ENCODE measurements at regions of chr2 and their contacts with region 1.

Region 1: GRCh38 chr2:218395797-218396687 is 3.6 kb upstream of the CTDSP1 start:
- H3K4me3 ChIP-seq: peak overlapping the region; percentile 74
- H3K27ac ChIP-seq: peak overlapping the region; percentile 93
- H3K4me1 ChIP-seq: peaks cover 15% of the 10 kb centered on the region
- CTCF ChIP-seq: peak; percentile 96

Region 2: GRCh38 chr2:218286570-218287459 is 109.2 kb before region 1 on chr2:
- CTCF ChIA-PET with region 1: interaction called, 4 read pairs
- POLR2A ChIA-PET with region 1: interaction called, 10 read pairs
- H3K4me3 ChIP-seq: peak overlapping the region; percentile 25
- H3K27ac ChIP-seq: peak overlapping the region; percentile 52
- H3K4me1 ChIP-seq: no peaks in the 10 kb centered on the region
- CTCF ChIP-seq: no peak

Region 3: GRCh38 chr2:218568190-218569037 is 172.4 kb after region 1 on chr2 and contains the starts of genes CNOT9 and USP37:
- CTCF ChIA-PET with region 1: no interaction called
- POLR2A ChIA-PET with region 1: no interaction called
- H3K4me3 ChIP-seq: peak within 1 kb of the TSS; percentile 83
- H3K27ac ChIP-seq: peak within 1 kb of the TSS; percentile 83
- H3K4me1 ChIP-seq: peaks cover 6% of the 10 kb centered on the region
- CTCF ChIP-seq: peak; percentile 41; the same call in 1 of the 2 replicates

Measured in HEK293 (cell line).